ENCODE measurements at regions of chr12 and their contacts with region 1.

Region 1: DNA sequence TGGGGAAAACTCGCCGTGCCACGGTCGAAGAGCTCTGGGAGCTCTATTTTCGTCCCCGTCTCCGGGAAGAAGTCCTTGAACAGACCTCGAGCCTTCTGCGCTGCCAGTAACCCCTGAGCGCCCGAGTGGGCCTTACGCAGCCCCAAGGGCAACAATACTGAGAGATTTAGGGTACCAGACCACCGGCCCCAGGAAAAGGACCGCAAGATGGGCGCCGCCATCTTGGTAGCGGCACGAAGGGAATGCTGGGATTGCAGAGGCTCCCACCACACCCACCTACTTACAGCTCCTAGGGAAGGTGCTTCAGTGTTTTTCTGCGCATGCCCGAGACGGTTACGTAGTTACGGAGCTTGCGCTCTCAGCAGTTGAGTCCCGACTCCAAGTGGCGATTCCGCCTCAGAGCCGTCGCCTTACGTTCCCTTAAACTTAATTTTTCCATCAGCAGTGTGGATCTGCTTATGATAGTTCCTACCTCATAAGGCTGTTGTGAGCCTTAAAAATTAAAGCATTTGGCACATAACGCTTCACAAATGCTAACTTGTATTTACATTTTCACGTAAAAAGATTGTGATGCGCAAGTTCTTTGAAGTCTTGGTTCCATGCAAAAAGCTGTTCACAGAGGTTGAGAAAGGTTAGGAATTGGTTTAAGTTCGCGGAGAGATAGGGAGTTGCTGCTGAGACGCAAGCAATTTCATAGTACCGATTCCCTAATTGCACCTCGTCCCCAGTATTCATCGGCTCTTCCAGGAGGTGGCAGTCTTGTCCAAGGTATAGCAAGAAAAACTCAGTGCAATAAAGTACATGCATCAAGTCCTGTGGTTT is at the start of gene YARS2:
- H3K4me3 Mint-ChIP-seq: peak within 1 kb of the TSS; percentile 83
- H3K27ac Mint-ChIP-seq: peak within 1 kb of the TSS; percentile 90
- H3K4me1 Mint-ChIP-seq: peaks cover 19% of the 10 kb centered on the region
- H3K27me3 Mint-ChIP-seq: no peaks in the 10 kb centered on the region

Region 2: GRCh38 chr12:32918890-32919801 is 163.3 kb after region 1 on chr12:
- intact Hi-C with region 1: loop called (anchors 2 kb)
- H3K4me3 Mint-ChIP-seq: no peak overlapping the region
- H3K27ac Mint-ChIP-seq: no peak overlapping the region
- H3K4me1 Mint-ChIP-seq: peaks cover 8% of the 10 kb centered on the region
- H3K27me3 Mint-ChIP-seq: no peaks in the 10 kb centered on the region

Region 3: DNA sequence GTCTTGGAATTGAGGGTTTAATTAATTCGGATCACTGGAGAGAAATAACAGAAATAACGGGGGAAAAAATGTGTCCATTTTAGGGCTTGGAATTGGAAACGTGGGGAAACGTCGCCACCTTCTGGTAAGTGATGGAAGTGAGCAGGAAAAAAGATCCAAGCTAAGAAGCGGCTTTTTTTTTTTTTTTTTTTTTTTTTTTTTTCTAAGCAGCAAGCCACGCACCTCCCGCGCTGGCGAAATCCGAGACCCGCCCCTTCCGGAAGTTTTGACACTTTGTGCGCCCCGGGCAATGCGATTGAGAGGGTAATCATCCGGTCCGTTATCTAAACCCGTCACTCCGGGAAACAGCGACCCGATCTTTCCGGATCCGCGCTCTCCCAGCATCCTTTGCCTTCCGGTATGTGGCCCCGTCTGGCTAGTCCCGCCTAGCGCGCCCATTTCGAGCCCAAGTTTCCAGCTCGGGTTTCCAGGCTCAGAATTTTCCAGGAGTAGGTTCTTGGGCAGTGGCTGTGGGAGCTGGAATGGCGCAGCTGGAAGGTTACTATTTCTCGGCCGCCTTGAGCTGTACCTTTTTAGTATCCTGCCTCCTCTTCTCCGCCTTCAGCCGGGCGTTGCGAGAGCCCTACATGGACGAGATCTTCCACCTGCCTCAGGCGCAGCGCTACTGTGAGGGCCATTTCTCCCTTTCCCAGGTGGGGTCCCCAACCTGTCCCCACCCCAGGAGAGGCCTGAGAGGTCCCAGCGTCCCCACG is 1266.4 kb after region 1 on chr12 and contains the start of gene ALG10:
- intact Hi-C with region 1: loop called (anchors 1 kb)
- H3K4me3 Mint-ChIP-seq: peak within 1 kb of the TSS; percentile 92
- H3K27ac Mint-ChIP-seq: peak within 1 kb of the TSS; percentile 93
- H3K4me1 Mint-ChIP-seq: peaks cover 19% of the 10 kb centered on the region
- H3K27me3 Mint-ChIP-seq: no peaks in the 10 kb centered on the region

Region 4: GRCh38 chr12:34218165-34219045 is 1462.5 kb after region 1 on chr12:
- intact Hi-C with region 1: loop called (anchors 5 kb)
- H3K4me3 Mint-ChIP-seq: peak overlapping the region; percentile 75
- H3K27ac Mint-ChIP-seq: peak overlapping the region; percentile 52
- H3K4me1 Mint-ChIP-seq: peaks cover 14% of the 10 kb centered on the region
- H3K27me3 Mint-ChIP-seq: peaks cover 23% of the 10 kb centered on the region

Measured in dendritic cell treated with granulocyte-macrophage colony-stimulating factor and Interleukin-4, amounts not matched to agents 40 ng/mL and 50 ng/mL, for 4 days (primary cell).